ENCODE measurements at regions of chr2 and their contacts with region 1.

Region 1: DNA sequence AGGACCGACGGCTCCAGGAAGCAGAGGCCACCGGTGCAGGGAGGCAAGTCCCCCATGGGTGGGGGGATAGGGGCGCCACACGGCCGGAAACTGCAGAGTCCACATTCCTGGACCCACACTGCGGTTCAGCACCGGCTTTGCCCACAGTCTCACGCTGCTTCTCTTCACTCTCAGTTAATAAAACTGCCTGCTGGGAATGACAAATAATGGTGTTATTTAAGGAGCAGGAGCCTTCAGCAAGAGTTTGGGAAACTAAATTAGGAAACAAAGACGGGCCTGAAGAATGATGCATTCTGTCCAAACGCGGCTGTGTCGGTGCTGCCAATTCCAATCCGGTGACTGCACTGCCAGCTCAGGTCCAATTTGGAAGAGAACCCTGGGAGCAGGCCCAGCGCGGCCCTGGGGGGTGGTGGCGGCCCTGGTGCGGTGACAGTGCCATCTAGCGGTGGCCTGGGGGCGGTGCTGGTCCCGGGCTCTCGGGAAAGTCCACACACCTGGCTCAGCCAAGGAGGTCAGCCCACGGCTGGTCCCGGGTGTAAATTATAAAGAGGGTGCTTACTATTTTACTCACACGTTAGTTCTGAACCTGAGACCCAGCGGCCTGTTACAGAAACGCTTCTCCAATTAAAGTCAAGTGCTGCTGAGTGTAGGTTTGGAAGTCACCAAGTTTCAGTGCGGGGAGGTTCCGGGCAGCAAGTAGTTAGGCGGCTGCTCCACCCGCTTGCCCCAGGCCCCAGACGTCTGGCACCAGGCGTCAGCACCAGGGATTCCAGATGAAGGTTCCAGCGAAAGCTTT is 73.1 kb upstream of the PXDN start:
- DNase-seq: peak; percentile 91
- H3K4me3 ChIP-seq: no peak overlapping the region
- CTCF ChIP-seq: peak; percentile 98

Region 2: DNA sequence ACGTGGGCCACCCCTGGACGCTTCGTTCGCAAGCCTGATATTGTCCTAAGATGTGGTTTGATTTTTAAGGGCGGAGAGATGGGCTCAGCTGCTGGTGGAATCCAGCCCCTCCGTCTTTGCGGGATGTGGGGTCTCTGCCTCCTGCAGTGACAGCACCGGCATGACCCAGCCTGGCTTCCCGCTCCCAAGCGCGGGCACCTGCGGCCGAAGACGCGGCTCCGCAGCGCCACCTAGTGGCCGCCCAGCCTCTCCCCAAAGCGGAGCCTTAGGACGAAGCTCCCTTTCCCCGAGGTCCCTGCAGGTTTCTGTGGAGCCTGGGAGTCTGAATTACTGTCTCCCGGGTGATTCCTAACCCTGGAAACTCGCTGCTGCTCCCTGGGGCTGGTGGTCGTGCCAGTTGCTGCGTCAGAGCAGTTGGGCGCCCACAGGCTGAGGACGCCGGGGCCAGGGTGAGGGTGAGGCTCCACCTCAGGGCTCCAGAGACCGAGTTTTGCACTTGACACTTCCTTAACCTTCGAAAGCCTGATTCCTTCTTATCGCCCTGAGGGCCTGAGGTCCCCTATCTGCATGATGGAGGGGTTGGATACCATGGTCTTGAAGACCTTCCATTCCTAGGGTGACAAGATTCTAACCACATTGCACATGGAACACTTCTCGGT is 266.7 kb before region 1 on chr2:
- in situ Hi-C with region 1: loop called (anchors 5 kb)
- DNase-seq: no peak
- H3K4me3 ChIP-seq: no peak overlapping the region
- CTCF ChIP-seq: peak; percentile 95

Region 3: DNA sequence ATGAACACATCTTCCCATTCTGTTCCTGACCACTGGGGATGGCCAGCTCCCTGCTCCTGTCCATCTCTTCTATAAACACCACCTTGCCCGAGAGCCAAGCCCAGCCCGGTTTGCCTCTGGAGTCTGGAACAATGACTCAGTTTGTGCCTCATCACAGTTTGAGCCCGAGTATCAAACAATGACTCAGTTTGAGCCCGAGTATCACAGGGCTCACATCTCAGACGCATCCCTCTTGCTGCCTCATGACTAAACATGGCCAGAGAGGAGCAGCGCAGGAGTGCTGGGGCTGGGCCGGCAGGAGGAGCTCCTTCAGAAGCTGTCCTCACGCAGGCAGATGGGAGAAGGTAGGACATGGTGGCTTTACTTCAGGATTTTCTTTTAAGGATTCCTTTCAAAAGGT is 141.8 kb before region 1 on chr2:
- in situ Hi-C with region 1: loop called (anchors 10 kb)
- DNase-seq: peak; percentile 89
- H3K4me3 ChIP-seq: no peak overlapping the region
- CTCF ChIP-seq: peak; percentile 88

Region 4: GRCh38 chr2:1750933-1751766 is 66.3 kb before region 1 on chr2:
- in situ Hi-C with region 1: loop called (anchors 5 kb)
- DNase-seq: peak; percentile 84
- H3K4me3 ChIP-seq: no peak overlapping the region
- CTCF ChIP-seq: peak; percentile 95

Region 5: DNA sequence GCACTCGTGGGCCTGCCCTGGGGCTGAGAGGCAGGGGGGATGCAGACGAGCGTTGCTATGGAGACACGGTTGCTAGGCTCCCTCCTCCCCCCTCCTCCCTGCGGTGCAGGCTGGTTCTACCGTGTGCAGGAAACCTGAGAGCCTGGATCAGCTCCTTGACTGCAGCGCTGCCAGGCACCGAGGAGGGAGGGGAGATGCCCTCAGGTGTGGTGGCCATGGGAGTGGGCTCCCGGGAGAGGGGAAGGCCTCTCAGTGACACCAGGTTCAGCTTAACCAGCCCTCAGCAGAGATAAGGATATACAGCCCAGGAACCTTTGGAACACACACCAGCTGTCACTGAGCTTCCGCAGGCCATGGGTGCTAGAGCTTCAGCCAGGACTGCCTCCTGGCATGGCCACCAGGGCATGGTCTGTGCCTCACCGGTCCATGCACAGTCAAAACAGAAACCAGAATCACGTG is 51.3 kb after region 1 on chr2:
- in situ Hi-C with region 1: no loop called
- DNase-seq: no peak
- H3K4me3 ChIP-seq: no peak overlapping the region
- CTCF ChIP-seq: no peak

Measured in astrocyte of the cerebellum (primary cell).